ENCODE measurements at regions of chr19 and their contacts with region 1.

Region 1: DNA sequence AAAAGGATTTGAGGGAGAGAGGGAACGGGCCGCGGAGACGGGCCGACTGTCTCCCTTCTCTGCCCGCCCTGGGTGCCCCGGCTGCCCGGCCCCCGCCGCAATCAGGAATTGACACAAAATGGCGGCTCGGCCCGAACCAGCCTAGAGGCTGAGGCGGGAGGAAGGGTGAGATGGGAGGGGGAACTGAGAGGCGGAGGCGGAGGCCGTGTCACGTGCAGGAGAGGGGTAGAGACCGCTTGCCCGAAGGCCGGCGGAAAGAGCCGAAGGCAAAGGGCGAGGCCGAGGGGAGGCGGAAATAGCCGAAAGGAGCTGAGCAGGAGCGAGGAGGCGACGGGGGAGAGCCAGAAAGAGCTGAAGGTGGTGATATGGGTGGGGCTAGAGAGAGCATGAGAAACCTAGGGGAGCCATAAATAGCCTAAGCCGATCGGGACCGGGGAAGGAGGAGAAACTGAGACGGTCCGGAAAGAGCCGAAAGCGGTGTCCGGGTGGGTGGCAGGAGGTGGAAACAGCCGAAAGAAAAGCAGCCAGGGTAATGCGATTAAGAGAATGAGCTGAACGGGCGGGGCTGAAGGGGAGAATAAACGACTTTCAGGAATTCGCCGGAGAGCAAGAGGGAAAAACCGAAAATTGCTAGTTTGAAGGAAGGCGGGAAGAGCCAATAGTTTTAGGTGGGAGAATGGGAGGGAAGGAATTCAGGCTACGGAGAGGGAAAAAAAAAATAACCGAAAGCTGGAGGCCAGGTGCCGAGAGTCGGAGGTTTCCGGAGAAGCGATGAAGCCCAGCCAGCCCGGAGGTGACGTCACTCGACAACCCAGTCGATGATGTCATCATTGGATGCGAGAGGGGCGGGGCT is at the start of gene ZC3H4:
- DNase-seq: peak; percentile 100
- H3K4me3 Mint-ChIP-seq: peak within 1 kb of the TSS; percentile 90
- H3K27ac Mint-ChIP-seq: peak within 1 kb of the TSS; percentile 100
- H3K4me1 Mint-ChIP-seq: peaks cover 32% of the 10 kb centered on the region
- H3K27me3 Mint-ChIP-seq: no peaks in the 10 kb centered on the region
- total RNA-seq, gene ZC3H4: 98.3 to 104 TPM

Region 2: GRCh38 chr19:46788262-46788967 is 324.8 kb before region 1 on chr19 and contains the start of gene SLC1A5:
- CTCF ChIA-PET with region 1: no interaction called
- POLR2A ChIA-PET with region 1: interaction called, 10 read pairs
- DNase-seq: peak; percentile 99
- H3K4me3 Mint-ChIP-seq: peak within 1 kb of the TSS; percentile 98
- H3K27ac Mint-ChIP-seq: peak within 1 kb of the TSS; percentile 98
- H3K4me1 Mint-ChIP-seq: peaks cover 61% of the 10 kb centered on the region
- H3K27me3 Mint-ChIP-seq: peaks cover under 1% of the 10 kb centered on the region
- total RNA-seq, gene SLC1A5: 200 to 208 TPM

Region 3: GRCh38 chr19:47035127-47036096 is 77.8 kb before region 1 on chr19:
- CTCF ChIA-PET with region 1: interaction called, 14 read pairs
- POLR2A ChIA-PET with region 1: interaction called, 5 read pairs
- DNase-seq: peak; percentile 95
- H3K4me3 Mint-ChIP-seq: peak overlapping the region; percentile 75
- H3K27ac Mint-ChIP-seq: peak overlapping the region; percentile 37
- H3K4me1 Mint-ChIP-seq: peaks cover 22% of the 10 kb centered on the region
- H3K27me3 Mint-ChIP-seq: peaks cover 18% of the 10 kb centered on the region

Region 4: DNA sequence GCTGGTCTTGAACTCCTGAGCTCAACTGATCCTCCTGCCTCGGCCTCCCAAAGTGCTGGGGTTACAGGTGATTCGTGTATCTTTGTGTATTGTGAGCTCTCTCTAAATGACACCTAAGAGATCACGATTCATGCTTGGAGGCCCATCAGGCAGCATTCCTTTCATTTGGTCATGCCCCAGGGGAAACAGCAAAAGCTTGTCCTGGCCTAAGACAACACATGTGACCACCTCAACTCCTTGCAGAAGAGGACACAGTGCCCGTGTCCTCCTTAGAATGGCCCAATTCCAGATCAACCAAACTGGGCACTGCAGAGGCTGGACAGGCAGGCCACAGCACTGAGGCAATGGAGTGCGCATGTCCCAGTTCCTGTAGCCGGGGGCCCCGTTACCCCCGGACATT is 32.1 kb before region 1 on chr19:
- CTCF ChIA-PET with region 1: interaction called, 16 read pairs
- POLR2A ChIA-PET with region 1: interaction called, 41 read pairs
- DNase-seq: no peak
- H3K4me3 Mint-ChIP-seq: no peak overlapping the region
- H3K27ac Mint-ChIP-seq: no peak overlapping the region
- H3K4me1 Mint-ChIP-seq: peaks cover 2% of the 10 kb centered on the region
- H3K27me3 Mint-ChIP-seq: no peaks in the 10 kb centered on the region

Region 5: GRCh38 chr19:47124937-47125668 is 11.9 kb after region 1 on chr19:
- CTCF ChIA-PET with region 1: interaction called, 13 read pairs
- POLR2A ChIA-PET with region 1: interaction called, 21 read pairs
- DNase-seq: peak; percentile 22
- H3K4me3 Mint-ChIP-seq: no peak overlapping the region
- H3K27ac Mint-ChIP-seq: no peak overlapping the region
- H3K4me1 Mint-ChIP-seq: peaks cover 7% of the 10 kb centered on the region
- H3K27me3 Mint-ChIP-seq: peaks cover 2% of the 10 kb centered on the region

Region 6: DNA sequence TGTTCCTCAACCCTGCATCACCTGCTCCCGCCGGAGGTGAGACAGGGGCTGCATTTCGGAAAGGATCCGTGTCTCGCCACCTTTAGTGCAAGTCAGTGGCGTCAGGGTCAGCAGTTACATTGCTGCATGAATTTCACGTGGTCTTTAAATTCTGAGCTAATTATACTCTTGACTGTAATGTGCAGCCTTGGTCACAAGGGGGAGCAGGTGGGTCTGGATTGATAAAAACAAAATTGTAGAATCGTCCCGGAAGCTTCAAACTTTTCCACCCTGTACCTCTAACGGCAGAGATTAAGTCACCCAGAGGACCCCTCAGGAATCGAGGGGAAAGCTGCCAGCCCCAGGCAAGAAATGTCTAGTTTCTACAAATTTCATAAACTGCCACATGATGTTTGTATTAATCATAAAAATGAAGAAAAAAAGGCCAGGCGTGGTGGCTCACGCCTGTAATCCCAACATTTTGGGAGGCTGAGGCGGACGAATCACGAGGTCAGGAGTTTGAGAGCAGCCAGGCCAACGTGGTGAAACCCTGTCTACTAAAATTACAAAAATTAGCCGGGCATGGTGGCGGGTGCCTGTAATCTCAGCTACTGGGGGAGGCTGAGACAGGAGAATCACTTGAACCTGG is 97.6 kb after region 1 on chr19:
- CTCF ChIA-PET with region 1: no interaction called
- POLR2A ChIA-PET with region 1: interaction called, 18 read pairs
- DNase-seq: peak; percentile 84
- H3K4me3 Mint-ChIP-seq: no peak overlapping the region
- H3K27ac Mint-ChIP-seq: peak overlapping the region; percentile 72
- H3K4me1 Mint-ChIP-seq: peaks cover 16% of the 10 kb centered on the region
- H3K27me3 Mint-ChIP-seq: no peaks in the 10 kb centered on the region

Region 7: DNA sequence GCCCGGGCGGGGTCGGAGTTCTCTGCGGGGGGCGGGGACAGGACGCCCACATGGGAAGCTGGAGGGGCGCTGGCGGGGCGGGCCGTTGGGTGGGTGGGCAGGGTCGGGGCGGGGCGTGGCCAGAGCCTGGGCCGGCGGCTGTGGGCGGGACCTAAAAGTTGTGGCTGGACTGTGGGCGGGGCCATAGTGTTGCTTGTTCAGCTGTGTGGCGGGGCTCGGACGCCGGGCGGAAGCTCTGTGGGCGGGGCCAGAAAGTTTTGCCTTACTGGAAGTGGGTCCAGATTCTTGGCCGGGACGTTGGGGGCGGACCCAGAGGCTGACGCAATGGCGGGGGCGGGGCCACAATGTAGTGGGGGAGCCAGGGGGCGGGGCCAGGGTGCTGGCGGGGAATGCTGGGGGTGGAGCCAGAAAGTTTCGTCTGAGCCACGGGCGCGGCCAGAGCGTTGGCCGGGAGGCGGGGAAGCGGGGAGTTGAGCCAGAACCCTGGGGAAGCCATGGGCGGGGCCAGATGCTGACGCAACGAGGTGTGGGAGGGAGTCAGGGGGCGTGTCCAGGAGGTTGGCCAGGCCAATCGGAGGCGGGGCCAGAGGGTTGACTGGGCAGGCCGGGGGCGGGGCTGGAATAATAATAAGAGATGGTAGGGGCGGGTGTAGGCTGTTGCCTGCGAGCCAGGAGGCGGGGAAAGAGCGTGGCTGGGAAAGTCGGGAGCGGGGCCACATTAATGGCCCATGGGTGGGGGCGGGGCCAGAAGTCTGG is 143.6 kb after region 1 on chr19:
- CTCF ChIA-PET with region 1: no interaction called
- POLR2A ChIA-PET with region 1: interaction called, 14 read pairs
- DNase-seq: peak; percentile 100
- H3K4me3 Mint-ChIP-seq: peak overlapping the region; percentile 85
- H3K27ac Mint-ChIP-seq: peak overlapping the region; percentile 85
- H3K4me1 Mint-ChIP-seq: peaks cover 40% of the 10 kb centered on the region
- H3K27me3 Mint-ChIP-seq: no peaks in the 10 kb centered on the region